ENCODE measurements at regions of chr10 and their contacts with region 1.

Region 1: GRCh38 chr10:109902934-109903589 is 20.2 kb downstream of the XPNPEP1 start:
- DNase-seq: peak in 4 of 35 experiments; percentile 16 to 29 (median 16)
- ATAC-seq: peak; percentile 72 to 82 (median 80)
- H3K4me3 ChIP-seq: no peak overlapping the region
- H3K4me3 Mint-ChIP-seq: peak overlapping the region; percentile 54 to 61 (median 54)
- H3K27ac ChIP-seq: no peak overlapping the region
- H3K27ac Mint-ChIP-seq: peak overlapping the region; percentile 85 to 95
- H3K4me1 ChIP-seq: peaks cover 0 to 14% of the 10 kb centered on the region in 2 experiments
- H3K4me1 Mint-ChIP-seq: peaks cover 51 to 61% (median 58%) of the 10 kb centered on the region in 3 donors
- H3K27me3 ChIP-seq: no peaks in the 10 kb centered on the region
- H3K27me3 Mint-ChIP-seq: no peaks in the 10 kb centered on the region

Region 2: DNA sequence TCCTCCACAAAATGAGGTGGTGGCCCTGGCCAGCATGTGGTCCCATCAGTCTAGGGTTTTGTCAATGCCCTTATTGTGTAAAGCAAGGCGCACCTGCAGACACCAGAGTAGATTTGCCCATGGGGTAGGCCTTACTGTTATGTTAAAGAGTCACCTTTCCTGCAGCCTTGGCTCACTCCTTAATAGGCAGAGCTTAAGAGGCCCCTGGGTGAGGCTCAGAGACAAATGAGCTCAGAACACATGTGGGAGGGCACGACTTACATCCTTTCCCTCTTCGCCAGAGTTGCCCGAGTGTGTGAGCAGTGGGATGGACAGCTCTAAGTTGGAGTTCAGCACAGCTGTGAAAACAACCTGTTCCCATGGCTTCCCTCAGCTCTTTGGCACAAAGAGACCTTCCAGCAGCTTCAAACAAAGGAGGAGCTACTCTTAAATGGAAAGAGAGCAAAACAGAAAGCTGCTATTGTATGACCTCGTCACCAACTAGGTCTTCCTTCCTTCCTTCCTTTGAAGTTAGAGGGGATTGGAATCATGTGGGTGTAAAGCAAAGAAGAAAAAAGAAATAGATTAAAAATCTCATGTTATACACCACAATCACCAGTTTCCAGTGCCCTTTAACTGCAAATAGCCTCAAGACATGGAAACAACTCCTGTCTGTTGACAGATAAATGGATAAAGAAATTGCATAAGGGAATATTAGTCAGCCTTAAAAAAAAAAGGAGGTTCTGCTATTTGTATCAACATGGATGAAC is 32.1 kb after region 1 on chr10:
- CTCF ChIA-PET with region 1: interaction called in 1 of 2 experiments, 10 read pairs
- POLR2A ChIA-PET with region 1: interaction called in 1 of 2 experiments, 3 read pairs
- DNase-seq: peak in 6 of 35 experiments; percentile 2 to 43 (median 20)
- ATAC-seq: peak; percentile 33 to 67 (median 44)
- H3K4me3 ChIP-seq: peak overlapping the region in 1 of 2 donors; percentile 10
- H3K4me3 Mint-ChIP-seq: peak overlapping the region; percentile 68 to 79 (median 78)
- H3K27ac ChIP-seq: peak overlapping the region; percentile 59
- H3K27ac Mint-ChIP-seq: peak overlapping the region; percentile 99
- H3K4me1 ChIP-seq: peaks cover 32 to 51% of the 10 kb centered on the region in 2 experiments
- H3K4me1 Mint-ChIP-seq: peaks cover 69 to 74% (median 74%) of the 10 kb centered on the region in 3 donors
- H3K27me3 ChIP-seq: no peaks in the 10 kb centered on the region
- H3K27me3 Mint-ChIP-seq: no peaks in the 10 kb centered on the region

Measured in T-cell (primary cell).